ENCODE measurements at regions of chr3 and their contacts with region 1.

Region 1: GRCh38 chr3:9792405-9793160 is at the starts of genes ARPC4 and TADA3:
- DNase-seq: peak; percentile 82 to 97 (median 92)
- ATAC-seq: peak; percentile 83
- H3K4me3 ChIP-seq: peak within 1 kb of the TSS; percentile 76 to 96
- H3K4me3 Mint-ChIP-seq: peak within 1 kb of the TSS; percentile 94
- H3K27ac ChIP-seq: peak within 1 kb of the TSS; percentile 93 to 98
- H3K27ac Mint-ChIP-seq: peak within 1 kb of the TSS; percentile 98
- H3K4me1 ChIP-seq: peaks cover 48% of the 10 kb centered on the region
- H3K4me1 Mint-ChIP-seq: peaks cover 58% of the 10 kb centered on the region
- H3K27me3 ChIP-seq: no peaks in the 10 kb centered on the region
- H3K27me3 Mint-ChIP-seq: no peaks in the 10 kb centered on the region
- CTCF ChIP-seq: no peak
- total RNA-seq, gene ARPC4: 97.7 to 104 TPM
- total RNA-seq, gene TADA3: 9.5 to 11.0 TPM

Region 2: DNA sequence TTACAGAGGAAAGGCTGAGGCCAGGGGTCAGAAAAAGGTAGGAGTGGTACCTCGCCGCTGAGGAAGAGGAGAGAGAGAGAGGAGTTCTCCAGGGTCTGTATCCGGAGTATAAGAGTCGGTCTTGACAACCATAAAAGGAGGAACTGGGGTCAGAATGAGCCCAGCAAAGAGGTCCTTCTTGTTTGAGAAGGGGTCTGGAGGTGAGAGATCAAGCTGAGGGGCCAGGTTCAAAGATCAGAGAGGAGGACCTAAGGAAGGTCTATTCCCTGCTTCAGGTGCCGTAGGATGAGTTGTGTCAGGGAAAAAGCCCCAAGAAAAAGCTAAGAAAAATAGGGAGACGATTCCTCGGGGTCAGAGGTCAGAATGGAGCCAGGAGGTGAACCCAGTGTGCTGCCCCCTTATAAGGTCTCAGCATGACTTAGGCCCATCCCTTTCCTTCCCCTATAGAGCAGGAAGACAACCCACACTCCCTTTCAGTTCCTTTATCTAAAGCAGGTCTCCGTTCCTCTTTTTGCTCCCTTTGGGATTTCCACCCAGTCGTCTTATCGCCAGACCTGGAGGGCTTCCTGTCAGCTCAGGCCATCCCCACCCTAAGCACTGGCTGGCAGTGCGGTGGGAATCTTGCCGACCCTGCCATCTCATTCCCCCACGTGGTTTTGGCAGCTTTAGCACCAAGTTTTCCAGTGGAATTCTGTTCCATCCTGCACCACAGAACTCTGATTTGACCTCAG is 142.6 kb before region 1 on chr3:
- CTCF ChIA-PET with region 1: no interaction called
- POLR2A ChIA-PET with region 1: interaction called, 11 read pairs
- intact Hi-C with region 1: loop called (anchors 1 to 2 kb)
- DNase-seq: peak in 2 of 9 experiments; percentile 10 to 42
- ATAC-seq: no peak
- H3K4me3 ChIP-seq: peak overlapping the region; percentile 90 to 91
- H3K4me3 Mint-ChIP-seq: peak overlapping the region; percentile 93
- H3K27ac ChIP-seq: peak overlapping the region; percentile 88 to 94
- H3K27ac Mint-ChIP-seq: peak overlapping the region; percentile 97
- H3K4me1 ChIP-seq: peaks cover 27% of the 10 kb centered on the region
- H3K4me1 Mint-ChIP-seq: peaks cover 39% of the 10 kb centered on the region
- H3K27me3 ChIP-seq: no peaks in the 10 kb centered on the region
- H3K27me3 Mint-ChIP-seq: no peaks in the 10 kb centered on the region
- CTCF ChIP-seq: no peak

Region 3: GRCh38 chr3:9749645-9750555 is 42.7 kb before region 1 on chr3 and contains the start of gene OGG1:
- CTCF ChIA-PET with region 1: interaction called, 4 read pairs
- POLR2A ChIA-PET with region 1: interaction called, 24 read pairs
- intact Hi-C with region 1: loop called (anchors 1 kb)
- DNase-seq: peak; percentile 84 to 98 (median 95)
- ATAC-seq: peak; percentile 93
- H3K4me3 ChIP-seq: peak within 1 kb of the TSS; percentile 79 to 94
- H3K4me3 Mint-ChIP-seq: peak within 1 kb of the TSS; percentile 96
- H3K27ac ChIP-seq: peak within 1 kb of the TSS; percentile 50 to 52
- H3K27ac Mint-ChIP-seq: peak within 1 kb of the TSS; percentile 93
- H3K4me1 ChIP-seq: peaks cover 35% of the 10 kb centered on the region
- H3K4me1 Mint-ChIP-seq: peaks cover 44% of the 10 kb centered on the region
- H3K27me3 ChIP-seq: no peaks in the 10 kb centered on the region
- H3K27me3 Mint-ChIP-seq: no peaks in the 10 kb centered on the region
- CTCF ChIP-seq: no peak
- total RNA-seq, gene OGG1: 4.9 to 7.9 TPM

Region 4: DNA sequence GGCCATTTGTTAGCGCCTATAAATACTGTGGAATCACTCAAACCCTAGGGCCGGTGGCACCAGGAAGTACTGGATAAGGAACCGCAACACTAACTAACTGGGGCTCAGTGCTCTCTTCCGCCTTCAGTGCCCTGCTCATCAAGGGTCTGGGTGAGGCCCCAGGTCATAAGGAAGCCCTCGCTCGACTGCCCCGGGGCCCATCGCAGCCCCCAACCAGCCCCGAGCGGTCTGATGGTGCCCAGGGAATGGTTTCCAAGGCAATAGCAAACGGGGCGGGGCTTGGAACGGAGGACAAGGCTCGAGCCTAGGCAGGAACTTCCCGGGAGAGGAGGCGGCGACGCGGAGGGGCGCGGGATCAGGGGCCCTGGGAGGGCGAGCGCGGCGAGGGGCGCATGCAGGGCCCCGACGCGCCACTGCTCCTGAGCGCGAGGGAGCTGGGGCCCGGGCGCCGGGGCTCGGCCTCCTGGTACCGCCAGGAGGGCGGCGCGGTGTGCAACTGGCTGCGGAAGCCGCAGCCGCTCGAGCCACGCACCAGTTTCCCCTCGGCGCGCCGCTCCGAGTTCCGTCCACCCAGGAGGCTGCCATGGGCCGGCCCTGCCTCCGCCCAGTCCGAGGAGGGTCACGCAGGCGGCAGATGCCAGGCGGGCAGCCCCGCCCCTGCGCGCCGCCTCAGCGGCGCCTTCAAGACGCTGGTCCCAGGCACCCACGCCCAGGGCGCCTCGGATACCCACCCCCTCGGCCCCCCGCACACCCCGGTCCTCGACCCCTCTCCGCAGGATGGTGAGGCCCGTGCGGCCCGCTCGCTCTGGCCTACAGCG is 17.2 kb after region 1 on chr3 and contains the start of gene TTLL3:
- CTCF ChIA-PET with region 1: interaction called, 3 read pairs
- POLR2A ChIA-PET with region 1: interaction called, 14 read pairs
- intact Hi-C with region 1: loop called (anchors 1 kb)
- DNase-seq: peak; percentile 6 to 76 (median 47)
- ATAC-seq: peak; percentile 64
- H3K4me3 ChIP-seq: peak within 1 kb of the TSS; percentile 59 to 62
- H3K4me3 Mint-ChIP-seq: peak within 1 kb of the TSS; percentile 87
- H3K27ac ChIP-seq: peak within 1 kb of the TSS; percentile 62 to 89
- H3K27ac Mint-ChIP-seq: peak within 1 kb of the TSS; percentile 93
- H3K4me1 ChIP-seq: peaks cover 22% of the 10 kb centered on the region
- H3K4me1 Mint-ChIP-seq: peaks cover 37% of the 10 kb centered on the region
- H3K27me3 ChIP-seq: no peaks in the 10 kb centered on the region
- H3K27me3 Mint-ChIP-seq: no peaks in the 10 kb centered on the region
- CTCF ChIP-seq: no peak
- total RNA-seq, gene TTLL3: 44.6 to 46.2 TPM

Region 5: DNA sequence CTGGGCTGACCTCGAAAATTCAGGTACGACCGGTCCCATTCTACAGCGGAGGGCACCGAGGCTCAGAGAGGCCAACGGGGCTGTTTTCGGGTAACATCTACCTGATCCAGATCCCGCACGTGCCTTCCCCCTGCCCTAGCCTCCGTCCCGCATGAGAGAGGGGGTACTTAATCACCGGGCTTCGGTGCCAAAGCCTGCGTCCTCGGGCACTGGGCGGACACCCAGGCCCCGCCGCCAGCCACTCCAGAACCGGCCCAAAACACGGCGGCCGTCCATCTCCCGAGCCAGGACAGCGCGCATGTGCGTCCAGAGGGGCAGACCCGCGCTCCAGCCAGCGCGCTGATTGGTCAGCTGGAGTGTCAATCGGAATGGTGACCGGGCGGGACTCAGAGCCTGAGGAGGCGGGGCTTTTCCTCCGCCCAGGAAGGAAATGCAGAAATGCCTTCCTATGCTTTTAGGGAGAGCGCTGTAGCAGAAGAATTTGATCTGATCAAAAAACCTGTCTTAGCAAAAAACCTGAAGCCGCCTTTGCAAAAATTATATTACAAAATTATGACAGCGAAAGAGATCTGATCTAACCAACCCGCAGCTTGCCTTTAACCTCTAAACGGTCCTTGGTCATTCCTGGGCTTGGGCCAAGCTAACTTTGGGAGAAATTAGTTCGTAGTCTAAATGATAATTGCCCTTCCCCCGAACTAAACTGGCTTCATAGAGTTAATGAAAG is 51.3 kb after region 1 on chr3 and contains the start of gene RPUSD3:
- CTCF ChIA-PET with region 1: interaction called, 3 read pairs
- POLR2A ChIA-PET with region 1: interaction called, 4 read pairs
- intact Hi-C with region 1: loop called (anchors 1 kb)
- DNase-seq: peak; percentile 93 to 99 (median 96)
- ATAC-seq: peak; percentile 98
- H3K4me3 ChIP-seq: peak within 1 kb of the TSS; percentile 96 to 99
- H3K4me3 Mint-ChIP-seq: peak within 1 kb of the TSS; percentile 97
- H3K27ac ChIP-seq: peak within 1 kb of the TSS; percentile 64 to 82
- H3K27ac Mint-ChIP-seq: peak within 1 kb of the TSS; percentile 90
- H3K4me1 ChIP-seq: peaks cover 6% of the 10 kb centered on the region
- H3K4me1 Mint-ChIP-seq: peaks cover 26% of the 10 kb centered on the region
- H3K27me3 ChIP-seq: no peaks in the 10 kb centered on the region
- H3K27me3 Mint-ChIP-seq: no peaks in the 10 kb centered on the region
- CTCF ChIP-seq: no peak
- total RNA-seq, gene RPUSD3: 5.3 to 6.4 TPM